Esophagus muscularis mucosa (tissue), 4 donors: ENCODE measurements at regions of chr12 and their contacts with region 1.

Region 1: DNA sequence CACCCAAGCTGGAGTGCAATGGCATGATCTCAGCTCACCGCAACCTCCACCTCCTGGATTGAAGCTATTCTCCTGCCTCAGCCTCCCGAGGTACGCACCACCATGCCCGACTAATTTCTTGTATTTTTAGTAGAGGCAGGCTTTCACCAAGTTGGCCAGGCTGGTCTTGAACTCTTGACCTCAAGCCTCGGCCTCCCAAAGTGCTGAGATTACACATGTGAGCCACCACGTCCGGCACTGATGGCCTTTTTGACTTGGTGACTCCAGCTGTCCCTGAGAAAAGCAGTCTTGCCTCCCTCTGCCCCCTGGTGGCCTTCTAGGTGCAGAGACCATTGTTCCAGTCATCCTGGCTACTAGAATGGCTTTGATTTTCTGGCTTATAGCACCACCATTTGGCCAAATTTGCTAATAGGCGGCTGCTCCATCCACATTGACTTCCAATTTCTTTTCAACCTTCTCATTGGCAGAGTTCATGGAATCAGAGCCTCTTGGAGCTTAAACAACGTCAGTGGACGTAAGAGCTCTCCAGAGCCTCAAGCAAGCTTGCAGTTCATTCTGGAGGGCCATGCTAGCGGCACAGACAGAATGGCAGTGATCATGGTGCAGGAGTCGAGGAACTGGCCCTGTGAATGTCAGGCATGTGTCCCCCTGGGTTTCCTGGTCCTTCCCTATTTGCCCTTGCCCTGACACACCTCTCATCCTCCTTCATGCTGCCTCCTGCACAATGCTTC is 25.4 kb upstream of the EIF4B start:
- DNase-seq: peak; percentile 96
- H3K4me3 ChIP-seq: no peak overlapping the region
- H3K27ac ChIP-seq: no peak overlapping the region
- H3K4me1 ChIP-seq: peaks cover 0 to 25% (median 7%) of the 10 kb centered on the region in 4 donors
- H3K27me3 ChIP-seq: peaks cover 0 to 10% (median 0%) of the 10 kb centered on the region in 4 donors
- CTCF ChIP-seq: peak; percentile 95 to 99 (median 95)
- EP300 ChIP-seq: no peak
- POLR2A ChIP-seq: no peak

Region 2: DNA sequence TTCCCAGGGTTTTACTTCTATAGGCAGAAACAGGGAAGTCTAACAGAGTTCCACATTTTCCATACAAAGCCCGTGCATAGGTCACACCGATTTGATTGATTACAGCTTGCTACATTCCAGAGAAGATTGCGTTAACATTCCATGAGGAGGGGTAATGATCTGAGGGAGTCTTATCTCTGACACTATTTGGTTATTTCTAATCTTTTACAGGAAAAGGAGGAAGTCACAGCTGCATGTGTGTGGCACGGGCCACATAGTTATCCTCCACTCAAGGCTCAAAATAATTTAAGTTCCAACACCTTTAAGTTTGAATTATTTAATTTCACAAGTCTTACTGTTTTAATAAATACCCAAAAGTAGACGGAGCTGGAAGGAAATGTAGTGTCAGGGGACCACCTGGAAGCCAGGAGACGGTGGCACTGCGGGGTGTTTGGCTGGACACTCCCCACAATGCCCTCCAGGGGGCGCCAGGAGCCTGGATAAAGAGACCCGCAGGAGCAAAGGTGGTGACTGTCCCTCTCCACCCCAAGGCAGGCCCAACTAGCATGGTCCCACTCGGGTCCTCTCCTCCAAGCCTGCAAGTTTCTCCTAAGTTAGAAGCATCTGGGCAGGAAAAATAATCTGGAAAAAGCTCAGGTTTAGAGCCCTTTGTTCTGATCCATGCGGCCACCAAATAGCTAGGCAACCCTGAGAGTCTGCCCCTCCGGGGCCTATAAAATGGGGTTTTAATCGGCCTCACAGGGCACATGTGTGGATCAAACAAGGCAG is 96.1 kb before region 1 on chr12:
- intact Hi-C with region 1: loop called (anchors 1 kb)
- DNase-seq: no peak
- H3K4me3 ChIP-seq: no peak overlapping the region
- H3K27ac ChIP-seq: no peak overlapping the region
- H3K4me1 ChIP-seq: peaks cover 2 to 6% (median 4%) of the 10 kb centered on the region in 4 donors
- H3K27me3 ChIP-seq: peaks cover 0 to 16% (median 0%) of the 10 kb centered on the region in 4 donors
- CTCF ChIP-seq: peak; percentile 90 to 98 (median 94)
- EP300 ChIP-seq: no peak
- POLR2A ChIP-seq: no peak

Region 3: DNA sequence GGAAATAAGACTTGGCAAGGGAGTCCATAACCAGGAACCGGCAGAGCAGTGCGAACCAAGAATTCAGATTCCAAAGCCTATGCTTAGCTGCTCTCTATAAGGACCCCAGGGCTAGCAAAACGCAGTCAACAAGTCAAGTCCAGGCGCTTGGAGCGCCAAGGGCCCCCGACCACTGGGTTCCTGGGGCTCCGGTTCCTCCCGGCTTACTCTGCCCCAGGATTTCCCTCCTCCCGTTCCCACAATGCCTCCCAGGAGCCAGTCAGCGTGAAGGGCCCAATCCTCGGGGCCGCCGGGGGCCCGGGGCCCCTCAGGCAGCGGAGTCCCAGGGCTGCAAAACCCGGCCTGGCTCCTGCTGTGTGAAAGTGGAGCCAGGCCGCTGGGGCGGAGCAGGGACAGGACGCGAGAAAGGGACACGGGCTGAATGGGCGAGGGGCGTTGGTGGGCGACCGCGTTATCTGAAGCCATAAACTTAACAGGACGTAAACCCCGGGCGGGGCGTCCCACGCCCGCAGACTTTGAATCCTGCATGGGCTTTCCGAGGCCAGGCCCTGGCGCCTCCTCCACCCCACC is 77.5 kb before region 1 on chr12:
- intact Hi-C with region 1: loop called (anchors 5 kb)
- DNase-seq: no peak
- H3K4me3 ChIP-seq: peak overlapping the region; percentile 66 to 71 (median 69)
- H3K27ac ChIP-seq: peak overlapping the region; percentile 90 to 93 (median 90)
- H3K4me1 ChIP-seq: peaks cover 7 to 79% (median 59%) of the 10 kb centered on the region in 4 donors
- H3K27me3 ChIP-seq: peaks cover 0 to 3% (median 0%) of the 10 kb centered on the region in 4 donors
- CTCF ChIP-seq: no peak
- EP300 ChIP-seq: no peak
- POLR2A ChIP-seq: peak; percentile 73

Region 4: GRCh38 chr12:52924764-52925716 is 55.8 kb before region 1 on chr12:
- intact Hi-C with region 1: loop called (anchors 5 kb)
- DNase-seq: no peak
- H3K4me3 ChIP-seq: no peak overlapping the region
- H3K27ac ChIP-seq: peak overlapping the region in 3 of 4 donors; percentile 63 to 72 (median 64)
- H3K4me1 ChIP-seq: peaks cover 15 to 37% (median 34%) of the 10 kb centered on the region in 4 donors
- H3K27me3 ChIP-seq: no peaks in the 10 kb centered on the region
- CTCF ChIP-seq: no peak
- EP300 ChIP-seq: no peak
- POLR2A ChIP-seq: no peak

Region 5: DNA sequence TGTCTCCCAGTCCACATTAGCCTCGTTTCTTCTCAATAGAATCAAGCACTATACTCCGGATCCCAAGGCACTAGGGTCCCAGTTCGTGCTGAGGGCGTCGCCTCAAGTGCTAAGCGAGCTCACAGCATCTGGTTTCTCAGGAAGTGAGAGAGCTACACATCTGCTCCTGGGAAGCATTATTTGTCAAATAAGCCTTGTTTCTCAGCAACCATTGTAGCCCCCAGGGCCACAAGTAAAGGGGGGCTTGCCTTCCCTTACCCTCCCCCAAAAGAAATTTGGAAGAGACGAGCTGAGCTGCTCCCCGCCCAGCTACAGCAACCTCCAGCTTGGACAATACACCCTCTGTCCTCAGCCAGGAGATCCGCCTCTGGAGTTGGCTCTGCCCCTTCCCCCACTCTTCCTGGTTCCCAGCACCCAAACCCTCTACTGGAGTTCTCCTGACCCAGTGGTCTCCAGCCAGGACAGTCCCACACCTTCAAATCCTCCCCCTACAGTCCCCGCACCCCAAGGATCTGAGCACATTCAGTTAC is 63.3 kb after region 1 on chr12:
- intact Hi-C with region 1: no loop called
- DNase-seq: no peak
- H3K4me3 ChIP-seq: peak overlapping the region in 2 of 4 donors; percentile 7 to 76
- H3K27ac ChIP-seq: peak overlapping the region; percentile 98 to 99 (median 99)
- H3K4me1 ChIP-seq: peaks cover 49 to 65% (median 64%) of the 10 kb centered on the region in 4 donors
- H3K27me3 ChIP-seq: no peaks in the 10 kb centered on the region
- CTCF ChIP-seq: no peak
- EP300 ChIP-seq: no peak
- POLR2A ChIP-seq: no peak